Right cardiac atrium (tissue), 5 donors: ENCODE measurements at regions of chr5 and their contacts with region 1.

Region 1: DNA sequence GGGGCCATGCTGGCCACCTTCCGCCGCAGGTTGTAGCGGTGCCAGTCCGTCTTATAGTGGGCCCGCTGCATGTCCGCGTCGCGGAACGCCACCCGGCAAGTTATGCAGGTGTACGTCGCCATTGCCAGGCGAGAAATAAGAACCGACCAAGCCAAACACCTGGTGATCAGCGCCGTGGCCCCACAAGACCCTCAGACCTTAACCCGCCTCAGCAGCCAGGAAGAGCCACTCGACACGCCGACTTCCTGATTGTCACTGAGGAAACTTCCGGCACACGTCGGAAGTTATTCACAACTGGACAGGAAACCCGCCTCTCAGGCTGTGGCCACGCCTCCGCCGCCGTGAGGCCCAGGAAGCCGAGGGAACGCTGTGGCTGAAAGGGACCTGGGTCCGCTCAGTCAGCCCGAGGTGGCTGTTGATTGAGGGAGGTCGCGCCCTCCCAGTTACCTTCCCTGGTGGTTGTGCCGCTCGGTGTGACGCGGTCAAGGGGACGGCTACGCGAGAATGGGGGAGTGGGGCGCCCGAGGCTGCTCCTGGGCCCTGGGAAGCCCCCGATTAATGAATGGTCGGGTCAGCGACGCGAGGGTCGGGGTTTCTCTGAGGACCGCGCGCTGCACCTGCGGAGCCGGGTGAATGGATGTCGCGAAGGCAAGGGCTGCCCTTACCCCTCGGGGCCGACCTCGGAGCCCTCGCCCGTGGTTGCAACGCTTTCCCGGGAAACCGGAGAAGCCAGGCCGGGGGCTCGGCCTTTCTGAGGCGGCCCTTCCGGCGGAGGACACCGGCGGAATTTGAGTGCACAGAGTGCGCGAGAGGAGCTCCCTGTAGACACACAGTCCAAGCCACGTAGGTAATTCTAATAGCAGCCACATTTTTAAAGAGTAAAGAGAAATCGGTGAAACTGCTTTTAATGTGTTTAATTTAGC is at the start of gene ZNF622:
- DNase-seq: peak; percentile 93 to 97 (median 95)
- ATAC-seq: peak; percentile 94 to 98
- H3K4me3 ChIP-seq: peak within 1 kb of the TSS; percentile 77
- H3K27ac ChIP-seq: peak within 1 kb of the TSS; percentile 81
- H3K4me1 ChIP-seq: peaks cover 5% of the 10 kb centered on the region
- H3K27me3 ChIP-seq: no peaks in the 10 kb centered on the region
- total RNA-seq, gene ZNF622: 35.9 to 51.0 (median 40.2) TPM

Region 2: DNA sequence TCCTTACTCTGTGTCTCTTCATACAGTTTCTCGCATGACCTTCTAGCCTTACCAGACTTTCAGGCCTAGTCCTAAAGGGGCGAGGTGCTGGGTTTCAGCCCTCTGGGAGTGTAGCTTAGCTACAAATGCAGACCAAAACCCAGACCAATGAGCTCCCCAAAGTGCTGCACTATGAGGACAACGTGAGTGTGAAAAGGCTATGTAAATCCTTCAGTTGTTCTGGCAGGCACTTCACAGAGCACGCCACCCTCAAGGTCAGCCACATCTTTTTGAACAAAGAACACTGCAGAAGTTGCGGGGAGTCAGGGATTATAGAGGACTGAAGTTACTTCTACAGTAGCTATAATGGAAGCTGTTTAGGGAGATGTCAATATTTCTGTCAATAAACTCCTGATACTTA is 587.9 kb before region 1 on chr5:
- intact Hi-C with region 1: no loop called
- DNase-seq: no peak
- ATAC-seq: peak in 1 of 2 donors; percentile 41
- H3K4me3 ChIP-seq: no peak overlapping the region
- H3K27ac ChIP-seq: no peak overlapping the region
- H3K4me1 ChIP-seq: no peaks in the 10 kb centered on the region
- H3K27me3 ChIP-seq: no peaks in the 10 kb centered on the region

Region 3: DNA sequence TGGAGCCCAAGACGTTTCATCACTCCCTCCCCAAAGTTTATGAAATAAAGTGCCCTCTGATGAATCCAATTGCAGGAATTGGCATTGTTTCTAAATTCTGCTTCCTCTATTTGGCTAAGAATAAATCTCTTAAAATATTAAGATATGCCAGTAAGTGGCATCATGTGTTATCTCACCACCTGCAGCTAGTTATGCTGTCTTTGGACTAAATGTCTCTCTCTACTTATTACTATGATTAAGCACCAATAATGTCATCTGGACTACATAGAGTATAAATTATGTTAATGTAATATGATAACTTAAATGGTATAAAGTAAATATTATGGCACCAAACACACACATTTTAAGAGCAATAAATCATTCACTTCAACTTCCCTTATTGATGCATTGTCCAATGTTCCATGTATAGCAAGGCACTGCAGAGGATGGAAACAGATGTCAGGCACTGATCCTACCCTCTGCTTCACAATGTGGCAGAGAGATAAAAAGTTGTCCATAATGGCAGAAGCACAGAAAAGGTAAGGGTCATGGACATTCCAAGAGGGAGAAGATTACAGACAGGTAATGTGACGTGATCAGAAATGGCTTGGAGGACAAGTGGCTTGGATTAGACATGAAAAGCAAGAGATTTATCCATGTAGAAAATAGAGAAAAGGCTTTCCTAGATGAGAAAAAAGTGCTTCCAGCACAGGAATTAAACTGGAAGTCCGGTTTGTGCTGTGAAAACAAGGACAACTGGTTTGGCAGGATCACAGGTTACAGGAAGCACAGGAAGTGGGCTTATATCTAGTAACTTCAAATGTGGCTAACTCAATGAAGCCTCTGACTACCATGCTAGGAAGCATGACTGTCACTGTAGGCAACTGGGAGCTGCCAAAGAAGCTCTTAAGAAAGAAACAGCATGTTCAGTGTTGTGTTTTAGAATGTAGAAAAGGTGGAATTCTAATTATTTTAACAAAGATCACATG is 312.9 kb before region 1 on chr5:
- intact Hi-C with region 1: loop called in 1 of 4 experiments (anchors 10 kb)
- DNase-seq: no peak
- ATAC-seq: no peak
- H3K4me3 ChIP-seq: no peak overlapping the region
- H3K27ac ChIP-seq: no peak overlapping the region
- H3K4me1 ChIP-seq: no peaks in the 10 kb centered on the region
- H3K27me3 ChIP-seq: no peaks in the 10 kb centered on the region